ENCODE measurements at regions of chr18 and their contacts with region 1.

Region 1: DNA sequence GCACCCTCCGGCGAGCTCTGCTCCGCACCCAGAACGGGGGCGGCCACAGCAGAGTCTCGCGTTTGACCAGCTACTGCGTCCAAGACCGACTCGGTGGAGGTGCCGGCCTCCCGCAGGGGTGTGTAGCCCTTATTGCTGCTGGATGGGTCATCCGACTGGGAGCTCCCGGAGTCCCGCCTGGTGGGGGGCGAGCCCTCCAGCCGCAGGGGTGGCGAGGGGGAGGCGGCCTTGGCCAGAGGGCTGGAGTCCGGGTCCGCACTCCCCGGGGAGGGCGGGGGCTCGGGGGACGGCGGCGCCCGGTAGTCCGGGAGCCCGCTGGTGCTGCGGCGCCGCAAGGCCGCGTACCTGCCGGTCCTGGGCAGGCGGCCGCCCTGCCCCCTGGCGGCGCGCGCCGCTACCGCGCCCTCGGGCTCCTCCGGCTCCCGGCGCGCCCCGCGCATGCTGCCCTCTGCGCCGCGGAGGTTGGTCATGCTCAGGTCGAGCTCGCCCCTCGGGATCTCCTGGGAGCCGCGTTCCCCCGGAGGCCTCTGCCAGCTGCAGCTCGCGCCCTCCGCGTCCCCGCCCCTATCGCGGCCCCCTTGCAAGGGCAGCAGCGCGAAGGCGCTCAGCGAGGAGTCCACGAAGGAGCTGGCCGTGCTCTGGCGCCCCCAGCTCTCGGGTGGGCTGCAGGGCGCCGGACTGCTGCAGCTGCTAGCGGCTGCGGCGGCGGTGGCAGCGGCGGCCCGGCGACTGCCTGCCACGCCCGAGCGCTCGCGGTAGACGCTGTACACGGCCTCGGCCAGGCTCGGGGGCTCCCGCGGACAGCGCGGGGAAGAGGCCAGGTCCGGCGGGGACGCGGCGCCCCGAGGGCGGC is 4.8 kb downstream of the TMEM200C start:
- DNase-seq: peak; percentile 70
- ATAC-seq: peak; percentile 78
- H3K4me3 Mint-ChIP-seq: peak overlapping the region; percentile 74
- H3K27ac Mint-ChIP-seq: no peak overlapping the region
- H3K4me1 Mint-ChIP-seq: peaks cover 31% of the 10 kb centered on the region
- H3K27me3 Mint-ChIP-seq: peaks cover 38% of the 10 kb centered on the region
- CTCF ChIP-seq: peak; percentile 58

Region 2: GRCh38 chr18:5600378-5601071 is 290.0 kb before region 1 on chr18:
- CTCF ChIA-PET with region 1: interaction called, 10 read pairs
- POLR2A ChIA-PET with region 1: no interaction called
- DNase-seq: no peak
- ATAC-seq: no peak
- H3K4me3 Mint-ChIP-seq: no peak overlapping the region
- H3K27ac Mint-ChIP-seq: no peak overlapping the region
- H3K4me1 Mint-ChIP-seq: peaks cover 16% of the 10 kb centered on the region
- H3K27me3 Mint-ChIP-seq: no peaks in the 10 kb centered on the region
- CTCF ChIP-seq: 0 out of 2 replicates have a peak, but pooled peaks have one; percentile 10

Region 3: GRCh38 chr18:5879479-5879882 is 11.1 kb before region 1 on chr18:
- CTCF ChIA-PET with region 1: interaction called, 14 read pairs
- POLR2A ChIA-PET with region 1: no interaction called
- DNase-seq: no peak
- ATAC-seq: no peak
- H3K4me3 Mint-ChIP-seq: no peak overlapping the region
- H3K27ac Mint-ChIP-seq: no peak overlapping the region
- H3K4me1 Mint-ChIP-seq: no peaks in the 10 kb centered on the region
- H3K27me3 Mint-ChIP-seq: no peaks in the 10 kb centered on the region
- CTCF ChIP-seq: peak; percentile 64

Region 4: GRCh38 chr18:5995626-5996025 is 105.1 kb after region 1 on chr18:
- CTCF ChIA-PET with region 1: interaction called, 11 read pairs
- POLR2A ChIA-PET with region 1: no interaction called
- DNase-seq: no peak
- ATAC-seq: peak; percentile 88
- H3K4me3 Mint-ChIP-seq: peak overlapping the region; percentile 19; the same call in 1 of the 2 replicates
- H3K27ac Mint-ChIP-seq: no peak overlapping the region
- H3K4me1 Mint-ChIP-seq: peaks cover 39% of the 10 kb centered on the region
- H3K27me3 Mint-ChIP-seq: peaks cover 2% of the 10 kb centered on the region; the same call in 1 of the 2 replicates
- CTCF ChIP-seq: no peak

Region 5: DNA sequence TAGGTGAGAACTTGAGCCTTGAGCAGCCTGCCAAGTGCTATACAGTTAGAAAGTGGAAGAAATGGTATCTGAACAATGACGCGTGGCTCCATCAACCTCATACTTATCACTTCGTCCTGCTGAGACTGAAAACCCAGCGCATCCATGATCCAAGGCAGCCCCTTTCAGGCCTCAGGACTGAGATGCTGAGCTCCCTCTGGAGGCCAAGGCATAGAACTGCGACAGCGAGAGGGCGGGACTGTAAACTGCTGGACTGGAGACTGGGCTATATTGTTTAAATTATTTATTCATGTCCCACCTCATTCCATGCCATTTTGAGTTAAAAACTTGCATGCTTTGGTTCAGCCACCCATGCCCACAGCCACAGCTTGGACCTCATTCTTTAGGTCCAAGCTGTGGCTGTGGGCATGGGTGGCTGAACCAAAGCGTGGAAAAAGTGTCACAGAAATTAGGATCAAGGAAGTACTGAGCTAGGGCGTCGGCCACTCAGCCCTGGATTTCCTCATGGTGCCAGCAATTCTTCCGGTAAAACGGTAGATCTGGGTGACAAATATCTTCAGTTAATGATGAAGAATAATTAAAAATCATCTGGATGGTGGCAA is 328.7 kb after region 1 on chr18:
- CTCF ChIA-PET with region 1: interaction called, 12 read pairs
- POLR2A ChIA-PET with region 1: no interaction called
- DNase-seq: peak; percentile 77
- ATAC-seq: peak; percentile 99
- H3K4me3 Mint-ChIP-seq: no peak overlapping the region
- H3K27ac Mint-ChIP-seq: no peak overlapping the region
- H3K4me1 Mint-ChIP-seq: no peaks in the 10 kb centered on the region
- H3K27me3 Mint-ChIP-seq: no peaks in the 10 kb centered on the region
- CTCF ChIP-seq: peak; percentile 73

Measured in WTC11 (cell line).